AG04450 (cell line): ENCODE measurements at regions of chr19 and their contacts with region 1.

Region 1: GRCh38 chr19:11482384-11483050 is 1.7 kb upstream of the ELAVL3 start:
- DNase-seq: peak; percentile 32
- H3K4me3 ChIP-seq: peak overlapping the region; percentile 51
- H3K27ac ChIP-seq: no peak overlapping the region
- H3K27me3 ChIP-seq: peaks cover 40% of the 10 kb centered on the region
- CTCF ChIP-seq: peak; percentile 82

Region 2: DNA sequence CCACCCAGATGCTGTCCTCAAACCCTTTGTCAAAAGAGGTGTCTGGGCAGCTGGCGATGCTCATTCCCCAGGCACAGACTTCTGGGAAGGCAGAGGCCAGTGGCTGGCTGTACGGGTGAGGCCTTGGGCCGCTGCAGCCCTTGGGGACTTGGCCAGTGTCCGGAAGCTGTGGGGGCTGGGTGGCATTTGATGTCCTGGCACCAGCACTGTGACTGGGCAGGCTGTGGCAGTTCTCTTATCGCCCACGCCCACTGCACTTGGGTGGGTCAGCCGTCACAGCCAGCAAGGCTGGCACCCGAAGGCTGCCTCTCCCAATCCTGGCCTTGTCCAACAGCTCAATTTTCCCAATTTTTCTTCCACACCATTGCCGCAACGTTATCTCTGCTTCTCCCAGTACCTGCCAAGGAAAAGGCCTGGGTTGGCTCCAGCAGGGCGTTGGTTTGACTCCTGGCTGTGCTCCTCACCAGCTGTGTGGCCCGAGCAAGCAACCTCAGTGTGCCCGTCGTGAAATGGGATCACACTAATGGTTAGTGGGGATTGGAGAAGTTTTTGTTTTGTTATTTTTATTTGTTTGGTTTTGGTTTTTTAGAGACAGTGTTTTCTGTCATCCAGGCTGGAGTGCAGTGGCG is 869.9 kb before region 1 on chr19:
- CTCF ChIA-PET with region 1: no interaction called
- POLR2A ChIA-PET with region 1: interaction called, 11 read pairs
- DNase-seq: no peak
- H3K4me3 ChIP-seq: no peak overlapping the region
- H3K27ac ChIP-seq: no peak overlapping the region
- H3K27me3 ChIP-seq: no peaks in the 10 kb centered on the region
- CTCF ChIP-seq: no peak

Region 3: GRCh38 chr19:11242864-11243797 is 239.4 kb before region 1 on chr19:
- CTCF ChIA-PET with region 1: interaction called, 22 read pairs
- POLR2A ChIA-PET with region 1: no interaction called
- DNase-seq: peak; percentile 65
- H3K4me3 ChIP-seq: peak overlapping the region; percentile 10; the same call in 1 of the 2 replicates
- H3K27ac ChIP-seq: no peak overlapping the region
- H3K27me3 ChIP-seq: no peaks in the 10 kb centered on the region
- CTCF ChIP-seq: peak; percentile 67

Region 4: DNA sequence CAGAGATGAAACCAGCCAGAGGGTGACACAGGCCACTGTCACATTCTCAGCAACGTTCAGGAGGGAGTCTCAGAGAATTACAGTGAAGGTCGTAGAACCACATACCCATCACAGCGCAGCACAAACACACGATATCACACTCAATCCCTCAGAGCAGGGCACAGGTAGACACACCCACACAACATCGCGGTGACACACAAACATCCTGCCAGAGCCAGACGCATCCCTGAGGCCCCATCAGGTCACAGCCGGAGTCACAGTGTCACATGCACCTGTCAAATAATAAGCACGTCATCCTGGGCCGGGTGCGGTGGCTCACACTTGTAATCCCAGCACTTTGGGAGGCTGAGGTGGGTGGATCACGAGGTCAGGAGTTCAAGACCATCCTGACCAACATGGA is 19.1 kb before region 1 on chr19:
- CTCF ChIA-PET with region 1: interaction called, 10 read pairs
- POLR2A ChIA-PET with region 1: no interaction called
- DNase-seq: no peak
- H3K4me3 ChIP-seq: no peak overlapping the region
- H3K27ac ChIP-seq: no peak overlapping the region
- H3K27me3 ChIP-seq: peaks cover under 1% of the 10 kb centered on the region
- CTCF ChIP-seq: no peak

Region 5: DNA sequence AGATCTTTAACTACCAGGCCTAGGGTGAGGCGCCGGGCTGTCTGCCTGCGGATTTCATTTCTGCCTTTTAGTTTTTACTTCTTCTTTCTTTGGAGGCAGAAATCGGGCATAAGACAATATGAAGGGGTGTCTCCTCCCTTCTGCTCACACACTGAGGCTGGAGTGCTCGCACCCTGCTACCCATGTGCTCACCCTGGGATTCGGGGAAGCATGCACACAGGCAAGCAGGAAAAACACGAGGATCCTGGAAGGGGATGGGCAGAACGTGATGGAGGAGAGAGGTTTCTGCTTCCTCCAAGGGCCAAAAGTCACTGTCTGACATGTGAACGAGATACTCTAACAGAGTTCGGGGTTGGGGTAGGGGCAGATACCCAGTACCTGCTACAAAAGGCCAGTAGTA is 227.8 kb after region 1 on chr19:
- CTCF ChIA-PET with region 1: no interaction called
- POLR2A ChIA-PET with region 1: no interaction called
- DNase-seq: no peak
- H3K4me3 ChIP-seq: no peak overlapping the region
- H3K27ac ChIP-seq: no peak overlapping the region
- H3K27me3 ChIP-seq: no peaks in the 10 kb centered on the region
- CTCF ChIP-seq: no peak